ENCODE measurements at regions of chr22 and their contacts with region 1.

Region 1: DNA sequence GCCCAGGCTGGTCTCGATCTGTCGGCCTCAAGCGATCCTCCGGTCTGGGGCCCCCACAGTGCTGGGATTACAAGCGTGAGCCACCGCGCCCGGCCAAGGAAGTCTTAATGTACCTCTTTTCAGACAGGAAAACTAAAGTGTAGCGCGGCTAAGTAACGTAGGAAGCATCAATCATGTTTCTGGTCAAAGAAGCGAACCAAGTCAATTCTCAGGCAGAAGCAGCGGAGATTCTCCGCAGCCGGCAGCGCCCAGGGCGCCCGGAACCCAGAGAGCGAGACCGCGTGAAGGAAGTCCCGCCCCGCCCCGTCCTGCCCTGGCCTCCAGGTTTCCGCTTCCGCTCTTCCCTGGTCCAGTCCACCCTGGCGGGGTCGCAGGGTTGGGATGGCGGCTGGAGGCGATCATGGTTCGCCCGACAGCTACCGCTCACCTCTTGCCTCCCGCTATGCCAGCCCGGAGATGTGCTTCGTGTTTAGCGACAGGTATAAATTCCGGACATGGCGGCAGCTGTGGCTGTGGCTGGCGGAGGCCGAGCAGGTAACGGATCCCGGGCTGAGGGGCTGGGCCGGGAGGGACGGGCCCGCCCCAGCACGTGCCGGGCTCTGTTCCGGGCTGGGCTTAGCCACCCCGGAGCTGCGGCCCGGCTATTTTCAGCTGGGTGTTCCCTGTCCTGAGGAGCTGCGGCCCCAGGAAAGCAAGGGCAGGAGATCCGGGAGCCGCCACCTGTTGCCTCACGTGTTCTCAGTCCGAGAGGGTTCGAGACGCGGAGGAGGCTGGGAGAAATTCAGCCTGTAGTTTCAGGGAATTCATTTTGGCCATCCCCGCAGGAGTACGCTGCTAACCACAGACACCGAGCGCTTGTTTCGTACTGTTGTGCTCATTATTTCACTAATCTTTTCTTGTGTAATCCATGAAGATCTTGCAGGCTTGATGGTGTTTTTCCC is at the start of gene ADSL:
- DNase-seq: peak; percentile 71 to 92 (median 86)
- H3K4me3 ChIP-seq: peak within 1 kb of the TSS; percentile 52 to 96 (median 86)
- H3K27ac ChIP-seq: peak within 1 kb of the TSS; percentile 18 to 92 (median 83)
- H3K27me3 ChIP-seq: no peaks in the 10 kb centered on the region
- CTCF ChIP-seq: peak in 37 of 56 donors; percentile 3 to 55 (median 30)
- total RNA-seq, gene ADSL: 19.7 to 50.9 (median 31.0) TPM

Region 2: GRCh38 chr22:40044102-40044869 is 302.2 kb before region 1 on chr22:
- intact Hi-C with region 1: loop called (anchors 2 to 5 kb)
- DNase-seq: peak; percentile 93 to 98 (median 98)
- H3K4me3 ChIP-seq: peak overlapping the region; percentile 50 to 98 (median 82)
- H3K27ac ChIP-seq: peak overlapping the region; percentile 80 to 100 (median 98)
- H3K27me3 ChIP-seq: peaks cover 0 to 22% (median 0%) of the 10 kb centered on the region in 45 donors
- CTCF ChIP-seq: peak in 7 of 56 donors; percentile 6 to 30 (median 13)

Region 3: GRCh38 chr22:40177738-40178416 is 168.6 kb before region 1 on chr22 and contains the start of gene TNRC6B:
- intact Hi-C with region 1: loop called (anchors 5 kb)
- DNase-seq: peak in 9 of 10 donors; percentile 61 to 91 (median 74)
- H3K4me3 ChIP-seq: peak within 1 kb of the TSS; percentile 41 to 97 (median 73)
- H3K27ac ChIP-seq: peak within 1 kb of the TSS; percentile 22 to 96 (median 87)
- H3K27me3 ChIP-seq: no peaks in the 10 kb centered on the region
- CTCF ChIP-seq: peak in 28 of 56 donors; percentile 8 to 58 (median 28)
- total RNA-seq, gene TNRC6B: 79.1 to 136 (median 104) TPM

Region 4: GRCh38 chr22:40183029-40183581 is 163.3 kb before region 1 on chr22:
- intact Hi-C with region 1: loop called (anchors 5 kb)
- DNase-seq: no peak
- H3K4me3 ChIP-seq: peak overlapping the region in 25 of 59 donors; percentile 1 to 42 (median 12)
- H3K27ac ChIP-seq: peak overlapping the region in 9 of 59 donors; percentile 2 to 57 (median 18)
- H3K27me3 ChIP-seq: no peaks in the 10 kb centered on the region
- CTCF ChIP-seq: no peak

Region 5: GRCh38 chr22:40238425-40239344 is 107.8 kb before region 1 on chr22:
- intact Hi-C with region 1: no loop called
- DNase-seq: peak in 2 of 10 donors; percentile 24 to 47
- H3K4me3 ChIP-seq: no peak overlapping the region
- H3K27ac ChIP-seq: peak overlapping the region in 31 of 59 donors; percentile 1 to 60 (median 33)
- H3K27me3 ChIP-seq: no peaks in the 10 kb centered on the region
- CTCF ChIP-seq: no peak